ENCODE measurements at regions of chr6 and their contacts with region 1.

Region 1: DNA sequence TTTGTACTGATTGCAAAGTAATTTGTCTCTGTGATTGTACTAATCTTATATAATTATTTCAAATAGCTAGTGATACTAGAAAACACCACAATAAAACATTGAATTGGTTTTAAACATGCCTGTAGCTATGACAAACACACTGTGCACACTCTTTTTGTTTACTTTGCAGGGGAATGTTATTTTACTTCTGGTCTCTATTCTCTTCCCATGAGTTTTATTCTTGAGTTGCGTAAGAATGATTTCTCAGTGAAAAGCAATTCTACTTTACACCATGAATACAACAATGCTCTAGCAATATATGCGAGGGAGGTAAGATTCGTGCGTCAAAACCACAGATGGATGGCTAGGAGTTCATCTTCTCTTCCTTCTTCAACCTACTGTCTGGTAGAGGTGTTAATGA is 68.4 kb upstream of the PHACTR1 start:
- DNase-seq: no peak

Region 2: DNA sequence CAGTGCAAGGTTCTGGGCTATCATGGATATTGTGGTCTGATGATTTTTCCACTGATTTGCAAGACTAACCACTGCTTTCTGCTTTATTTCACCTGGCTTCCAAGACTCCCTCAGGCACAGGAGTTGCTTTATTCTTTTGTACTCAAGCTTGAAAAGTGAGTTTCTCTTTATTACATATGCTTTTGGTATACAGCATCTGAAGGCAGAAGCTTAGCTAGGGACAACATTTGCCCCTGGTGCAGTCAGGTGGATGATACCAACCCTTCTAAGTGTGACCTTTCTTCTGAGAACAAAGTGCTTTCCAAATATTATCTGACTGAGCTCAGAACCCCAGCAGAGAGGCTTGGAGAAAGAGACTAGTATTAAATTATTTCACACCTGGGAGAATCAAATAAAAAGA is 25.6 kb before region 1 on chr6:
- intact Hi-C with region 1: no loop called
- DNase-seq: no peak

Region 3: GRCh38 chr6:12666886-12667285 is 18.7 kb after region 1 on chr6:
- intact Hi-C with region 1: loop called in 1 of 2 experiments (anchors 1 kb)
- DNase-seq: no peak

Region 4: GRCh38 chr6:12761381-12762120 is 113.4 kb after region 1 on chr6:
- intact Hi-C with region 1: no loop called
- DNase-seq: no peak